Activated B cell treated with CpG ODN at 0.5 μM for 24 hours (primary cell): ENCODE measurements at regions of chr3 and their contacts with region 1.

Region 1: GRCh38 chr3:167882067-167882667 is 146.6 kb downstream of the SERPINI1 start:
- DNase-seq: no peak
- ATAC-seq: peak; percentile 64
- H3K4me3 Mint-ChIP-seq: peak overlapping the region; percentile 5
- H3K27ac Mint-ChIP-seq: no peak overlapping the region
- H3K4me1 Mint-ChIP-seq: peaks cover 4% of the 10 kb centered on the region
- H3K27me3 Mint-ChIP-seq: no peaks in the 10 kb centered on the region
- CTCF ChIP-seq: peak; percentile 31

Region 2: GRCh38 chr3:166013073-166013679 is 1869.0 kb before region 1 on chr3:
- CTCF ChIA-PET with region 1: no interaction called
- POLR2A ChIA-PET with region 1: no interaction called
- intact Hi-C with region 1: loop called (anchors 2 kb)
- DNase-seq: no peak
- ATAC-seq: no peak
- H3K4me3 Mint-ChIP-seq: no peak overlapping the region
- H3K27ac Mint-ChIP-seq: no peak overlapping the region
- H3K4me1 Mint-ChIP-seq: no peaks in the 10 kb centered on the region
- H3K27me3 Mint-ChIP-seq: no peaks in the 10 kb centered on the region
- CTCF ChIP-seq: no peak

Region 3: GRCh38 chr3:167380004-167380689 is 502.0 kb before region 1 on chr3 and contains the start of gene ZBBX:
- CTCF ChIA-PET with region 1: interaction called, 52 read pairs
- POLR2A ChIA-PET with region 1: no interaction called
- intact Hi-C with region 1: loop called (anchors 1 kb)
- DNase-seq: peak; percentile 79
- ATAC-seq: peak; percentile 95
- H3K4me3 Mint-ChIP-seq: peak within 1 kb of the TSS; percentile 86
- H3K27ac Mint-ChIP-seq: peak within 1 kb of the TSS; percentile 53
- H3K4me1 Mint-ChIP-seq: peaks cover 6% of the 10 kb centered on the region
- H3K27me3 Mint-ChIP-seq: peaks cover 3% of the 10 kb centered on the region
- CTCF ChIP-seq: peak; percentile 38
- total RNA-seq, gene ZBBX: not detected in 2 replicates

Region 4: DNA sequence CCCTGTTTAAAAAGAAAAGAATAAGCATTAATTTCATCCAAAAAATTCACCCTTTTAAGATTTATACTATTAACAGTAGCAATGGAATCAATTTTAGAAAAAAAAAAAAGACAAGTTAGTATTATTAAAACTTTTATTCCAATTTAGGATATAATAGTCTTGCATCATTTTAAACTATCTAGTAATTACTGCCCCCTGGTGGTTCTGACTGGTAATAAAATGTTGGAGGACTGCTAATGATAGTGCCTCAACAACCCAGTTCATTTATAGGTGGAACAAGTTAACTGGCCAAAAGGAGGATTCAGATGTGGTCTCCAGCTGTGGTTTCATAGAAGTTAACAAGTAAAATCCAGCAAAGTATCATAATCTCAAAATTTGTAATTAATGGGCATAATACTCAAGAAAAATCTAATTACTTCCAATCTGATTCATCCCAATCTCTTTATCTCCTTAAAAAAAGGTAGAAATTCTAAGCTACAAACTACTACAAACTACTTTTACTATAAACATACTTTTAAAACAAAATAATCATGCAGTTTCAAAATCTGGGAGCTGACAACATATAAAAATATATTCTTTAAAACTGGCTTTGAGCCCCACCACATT is 197.7 kb before region 1 on chr3:
- CTCF ChIA-PET with region 1: interaction called, 10 read pairs
- POLR2A ChIA-PET with region 1: no interaction called
- intact Hi-C with region 1: loop called (anchors 1 kb)
- DNase-seq: no peak
- ATAC-seq: peak; percentile 75
- H3K4me3 Mint-ChIP-seq: no peak overlapping the region
- H3K27ac Mint-ChIP-seq: no peak overlapping the region
- H3K4me1 Mint-ChIP-seq: no peaks in the 10 kb centered on the region
- H3K27me3 Mint-ChIP-seq: no peaks in the 10 kb centered on the region
- CTCF ChIP-seq: no peak

Region 5: DNA sequence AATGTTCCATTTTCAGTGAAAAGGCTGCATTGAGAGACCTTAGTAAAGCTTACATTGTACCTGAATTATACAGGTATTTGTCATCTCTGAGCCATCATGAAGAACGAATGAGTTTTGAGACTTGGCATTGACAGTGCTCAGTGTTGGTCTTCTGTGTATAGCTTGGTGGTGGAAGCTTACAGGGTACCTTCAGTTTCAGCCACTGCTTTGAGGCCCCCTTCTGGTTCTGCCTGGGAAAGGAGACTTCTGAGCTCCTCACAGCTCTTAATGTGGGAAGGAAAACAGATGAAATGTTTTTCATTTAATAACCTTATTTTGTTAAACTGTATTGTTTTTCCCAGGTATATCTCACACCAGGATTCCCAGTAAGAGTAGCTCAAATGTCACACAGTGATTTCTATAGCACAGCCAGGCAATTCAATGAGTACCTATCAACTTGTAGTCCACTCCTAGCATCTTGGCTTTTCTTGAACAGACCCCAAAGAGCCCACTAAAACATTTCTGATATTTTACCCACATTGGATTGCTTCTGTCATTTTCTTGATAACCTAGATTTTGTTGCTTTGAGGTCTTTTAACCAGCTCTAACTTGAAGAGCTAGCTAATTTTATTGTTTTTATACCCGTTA is 141.1 kb before region 1 on chr3:
- CTCF ChIA-PET with region 1: interaction called, 13 read pairs
- POLR2A ChIA-PET with region 1: no interaction called
- intact Hi-C with region 1: loop called (anchors 5 kb)
- DNase-seq: no peak
- ATAC-seq: peak; percentile 97
- H3K4me3 Mint-ChIP-seq: no peak overlapping the region
- H3K27ac Mint-ChIP-seq: peak overlapping the region; percentile 18
- H3K4me1 Mint-ChIP-seq: peaks cover 35% of the 10 kb centered on the region
- H3K27me3 Mint-ChIP-seq: no peaks in the 10 kb centered on the region
- CTCF ChIP-seq: no peak

Region 6: DNA sequence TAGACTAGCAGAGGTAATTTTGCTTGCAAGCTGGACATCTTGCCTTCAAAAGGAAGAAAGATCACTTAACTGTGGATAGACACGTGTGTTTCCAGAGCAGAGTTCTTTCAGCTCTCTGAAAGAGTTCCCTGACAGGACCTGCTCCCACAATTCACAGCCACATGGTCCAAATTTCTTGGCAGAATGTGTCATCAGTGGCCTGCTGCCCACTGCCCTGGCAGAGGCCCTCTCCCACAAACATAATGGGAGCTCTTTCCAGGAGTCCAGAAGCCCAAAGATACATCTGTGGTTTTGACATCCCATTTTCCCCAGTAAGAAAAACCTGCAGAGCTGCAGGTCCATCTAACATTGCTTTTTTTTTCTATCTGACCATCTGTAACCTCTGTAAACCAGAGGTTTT is 98.4 kb before region 1 on chr3:
- CTCF ChIA-PET with region 1: no interaction called
- POLR2A ChIA-PET with region 1: no interaction called
- intact Hi-C with region 1: no loop called
- DNase-seq: no peak
- ATAC-seq: no peak
- H3K4me3 Mint-ChIP-seq: no peak overlapping the region
- H3K27ac Mint-ChIP-seq: no peak overlapping the region
- H3K4me1 Mint-ChIP-seq: no peaks in the 10 kb centered on the region
- H3K27me3 Mint-ChIP-seq: no peaks in the 10 kb centered on the region
- CTCF ChIP-seq: no peak

Region 7: GRCh38 chr3:167892215-167892614 is 10.0 kb after region 1 on chr3:
- CTCF ChIA-PET with region 1: interaction called, 11 read pairs
- POLR2A ChIA-PET with region 1: no interaction called
- intact Hi-C with region 1: no loop called
- DNase-seq: no peak
- ATAC-seq: no peak
- H3K4me3 Mint-ChIP-seq: no peak overlapping the region
- H3K27ac Mint-ChIP-seq: no peak overlapping the region
- H3K4me1 Mint-ChIP-seq: no peaks in the 10 kb centered on the region
- H3K27me3 Mint-ChIP-seq: no peaks in the 10 kb centered on the region
- CTCF ChIP-seq: no peak